Activated CD8-positive, alpha-beta T cell treated with anti-CD3 and anti-CD28 coated beads for 36 hours (primary cell): ENCODE measurements at regions of chr9 and their contacts with region 1.

Region 1: GRCh38 chr9:17462869-17463464 is 115.9 kb upstream of the SH3GL2 start:
- DNase-seq: peak; percentile 35
- ATAC-seq: no peak
- H3K4me3 Mint-ChIP-seq: no peak overlapping the region
- H3K27ac Mint-ChIP-seq: no peak overlapping the region
- H3K4me1 Mint-ChIP-seq: no peaks in the 10 kb centered on the region
- H3K27me3 Mint-ChIP-seq: no peaks in the 10 kb centered on the region
- CTCF ChIP-seq: peak; percentile 80

Region 2: DNA sequence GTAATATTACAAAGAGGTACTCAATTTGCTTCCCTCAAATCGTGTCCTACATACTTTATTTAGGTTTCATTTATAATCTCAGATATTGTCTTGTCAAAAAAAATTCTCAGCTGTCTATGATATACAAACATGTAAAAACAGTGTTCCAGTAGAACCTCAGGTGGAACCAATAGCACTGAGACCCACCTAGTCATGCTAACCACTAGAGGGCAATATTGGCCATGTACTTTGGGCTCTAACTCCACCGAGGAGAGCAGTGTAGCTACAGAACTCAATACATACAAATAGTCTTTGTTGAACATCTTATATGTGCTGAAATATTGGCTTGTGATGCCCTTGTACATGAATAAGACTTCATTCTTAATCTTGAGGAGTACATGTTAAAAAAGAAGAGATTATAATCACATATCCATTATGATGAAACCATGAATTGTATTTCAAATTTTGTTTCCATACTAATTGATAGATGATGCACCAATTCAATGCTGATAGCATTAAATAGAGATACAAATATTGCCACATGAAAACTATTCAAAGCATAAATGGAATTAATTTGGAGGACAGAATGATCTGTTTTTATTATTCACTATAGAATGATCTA is 399.3 kb before region 1 on chr9:
- CTCF ChIA-PET with region 1: interaction called, 12 read pairs
- POLR2A ChIA-PET with region 1: no interaction called
- intact Hi-C with region 1: loop called (anchors 5 kb)
- DNase-seq: peak; percentile 11
- ATAC-seq: no peak
- H3K4me3 Mint-ChIP-seq: no peak overlapping the region
- H3K27ac Mint-ChIP-seq: no peak overlapping the region
- H3K4me1 Mint-ChIP-seq: no peaks in the 10 kb centered on the region
- H3K27me3 Mint-ChIP-seq: no peaks in the 10 kb centered on the region
- CTCF ChIP-seq: peak; percentile 53

Region 3: GRCh38 chr9:17116400-17116837 is 346.5 kb before region 1 on chr9:
- CTCF ChIA-PET with region 1: interaction called, 12 read pairs
- POLR2A ChIA-PET with region 1: no interaction called
- intact Hi-C with region 1: loop called (anchors 5 kb)
- DNase-seq: no peak
- ATAC-seq: no peak
- H3K4me3 Mint-ChIP-seq: no peak overlapping the region
- H3K27ac Mint-ChIP-seq: no peak overlapping the region
- H3K4me1 Mint-ChIP-seq: no peaks in the 10 kb centered on the region
- H3K27me3 Mint-ChIP-seq: no peaks in the 10 kb centered on the region
- CTCF ChIP-seq: peak; percentile 63

Region 4: DNA sequence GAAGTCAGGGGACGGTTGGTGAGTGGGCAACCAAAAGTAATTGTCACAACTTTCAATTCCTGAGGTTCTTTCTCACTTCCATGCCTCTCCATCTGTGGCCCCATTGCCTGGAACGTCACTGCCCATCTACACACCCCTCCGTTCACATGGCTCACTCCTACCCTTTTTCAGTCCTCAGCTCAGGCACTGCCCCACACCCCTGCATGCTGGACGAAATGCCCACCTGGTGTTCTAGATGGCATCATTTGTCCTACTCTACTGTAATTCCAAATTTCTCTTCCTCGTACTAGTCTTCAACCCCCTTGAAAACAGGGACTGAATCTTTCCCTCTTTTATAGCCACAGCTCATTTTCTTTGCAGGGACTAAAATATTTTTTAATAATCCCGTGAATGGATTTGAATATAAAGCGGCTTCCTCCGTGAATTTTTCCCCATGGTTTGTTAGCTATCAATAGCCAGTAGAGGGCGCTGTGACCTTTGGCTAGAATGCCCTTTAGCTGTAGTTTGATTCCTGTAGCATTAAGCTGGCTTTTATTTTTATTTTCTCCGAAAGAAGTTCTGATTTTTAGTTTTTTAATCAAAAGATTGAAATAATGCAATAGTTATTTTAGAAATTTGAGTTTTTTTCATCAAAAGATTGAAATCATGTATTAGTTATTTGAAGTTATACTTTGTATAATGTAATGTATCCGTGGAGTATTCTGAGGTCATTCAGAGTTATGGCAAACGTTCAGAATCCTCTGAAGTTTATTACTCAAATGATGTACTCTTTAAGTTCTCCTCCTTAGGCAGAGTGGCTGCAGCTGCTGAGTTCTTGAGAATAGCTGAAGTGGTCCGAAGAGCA is 348.0 kb after region 1 on chr9:
- CTCF ChIA-PET with region 1: no interaction called
- POLR2A ChIA-PET with region 1: no interaction called
- intact Hi-C with region 1: no loop called
- DNase-seq: peak; percentile 64
- ATAC-seq: no peak
- H3K4me3 Mint-ChIP-seq: no peak overlapping the region
- H3K27ac Mint-ChIP-seq: no peak overlapping the region
- H3K4me1 Mint-ChIP-seq: no peaks in the 10 kb centered on the region
- H3K27me3 Mint-ChIP-seq: peaks cover 6% of the 10 kb centered on the region
- CTCF ChIP-seq: peak; percentile 84